Prostate gland (tissue), 2 donors: ENCODE measurements at regions of chr15 and their contacts with region 1.

Region 1: DNA sequence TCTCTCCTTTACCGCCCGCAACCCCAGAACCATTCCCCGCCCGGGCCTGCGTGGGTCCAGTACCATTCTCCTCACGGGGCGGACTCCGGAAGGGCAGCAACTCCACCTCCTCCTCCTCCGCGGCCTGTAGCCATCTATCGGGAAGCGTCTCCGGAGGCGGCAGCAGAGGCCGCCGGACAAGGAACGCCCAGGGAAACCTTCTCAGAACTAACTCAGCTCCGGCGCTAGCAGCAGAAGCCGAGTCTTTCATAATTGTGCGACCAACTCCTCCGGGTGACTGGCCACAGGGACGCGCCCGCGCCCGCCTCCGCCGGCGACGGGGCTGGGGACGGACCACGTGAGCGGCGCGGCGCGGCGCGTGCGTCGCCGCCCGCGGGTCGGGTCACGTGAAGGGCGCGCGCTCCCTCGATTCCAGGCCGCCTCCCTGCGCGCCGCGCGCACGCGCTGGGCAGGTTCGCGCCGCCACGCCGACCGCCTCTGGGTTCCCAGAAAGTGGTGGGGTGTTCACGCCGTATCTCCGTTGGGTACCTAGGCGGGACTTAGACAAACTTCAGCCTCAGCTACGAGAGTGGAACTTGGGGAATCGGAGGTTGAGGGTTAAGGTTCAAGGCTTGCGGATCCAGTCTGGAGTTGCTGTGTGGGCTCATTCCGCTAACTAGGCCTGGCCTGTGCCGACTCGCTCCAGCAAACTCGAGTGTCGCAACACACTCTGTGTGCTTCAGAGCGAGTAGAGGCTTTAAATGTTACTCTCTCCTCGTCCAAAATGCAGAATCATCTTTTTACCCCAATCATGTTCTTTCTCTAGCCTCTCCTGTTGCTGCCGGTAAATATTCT is at the start of gene TRPM7:
- DNase-seq: peak; percentile 84
- H3K4me3 ChIP-seq: peak within 1 kb of the TSS; percentile 66 to 78
- H3K27ac ChIP-seq: peak within 1 kb of the TSS; percentile 92 to 93
- H3K4me1 ChIP-seq: peaks cover 3% of the 10 kb centered on the region
- H3K27me3 ChIP-seq: no peaks in the 10 kb centered on the region
- CTCF ChIP-seq: peak in 1 of 4 experiments; percentile 4
- POLR2A ChIP-seq: peak; percentile 72
- total RNA-seq, gene TRPM7: 27.0 to 32.5 TPM

Region 2: DNA sequence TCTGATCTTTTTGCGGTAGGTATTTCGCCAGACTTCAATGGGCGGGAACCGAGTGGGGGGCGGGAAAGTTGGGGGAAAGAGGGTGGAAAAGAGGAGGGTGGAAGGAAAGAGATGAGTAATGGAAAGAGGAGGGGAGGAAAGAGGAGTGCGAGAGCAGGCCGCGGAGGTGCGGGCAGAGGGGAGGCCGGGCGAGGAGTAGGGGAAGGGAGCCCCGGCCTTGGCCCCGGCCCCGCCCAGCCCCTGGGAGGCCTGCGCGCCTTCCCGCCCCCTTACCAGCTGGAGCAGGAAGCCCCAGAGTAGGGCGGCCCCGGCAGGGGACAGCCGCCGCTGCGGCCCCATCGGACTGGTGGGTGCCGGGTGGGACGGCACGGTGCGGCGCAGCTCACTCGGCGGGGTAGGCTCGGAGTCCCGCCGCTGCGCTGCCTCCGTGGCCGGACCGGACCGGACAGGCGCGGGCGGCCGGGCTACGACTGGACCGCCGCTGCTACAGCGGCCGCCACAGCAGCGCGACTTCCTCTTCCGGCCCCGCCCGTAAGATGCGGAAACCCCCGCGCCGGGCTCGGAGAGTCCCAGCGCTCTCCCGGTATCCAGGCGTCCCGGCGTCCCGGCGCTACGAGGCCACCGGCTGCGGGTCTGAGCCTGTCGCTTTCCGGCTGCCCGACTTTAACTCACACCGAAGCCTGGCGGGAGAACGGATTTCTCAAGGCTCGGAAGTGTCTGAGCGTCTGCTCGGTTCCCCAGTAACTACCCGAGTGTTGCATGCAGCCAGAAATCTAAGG is 78.7 kb after region 1 on chr15 and contains the start of gene SPPL2A:
- intact Hi-C with region 1: loop called (anchors 2 kb)
- DNase-seq: peak; percentile 76
- H3K4me3 ChIP-seq: peak within 1 kb of the TSS; percentile 93 to 96
- H3K27ac ChIP-seq: peak within 1 kb of the TSS; percentile 94 to 95
- H3K4me1 ChIP-seq: no peaks in the 10 kb centered on the region
- H3K27me3 ChIP-seq: no peaks in the 10 kb centered on the region
- CTCF ChIP-seq: no peak
- POLR2A ChIP-seq: peak; percentile 75
- total RNA-seq, gene SPPL2A: 129 to 335 TPM

Region 3: GRCh38 chr15:50908210-50909009 is 221.7 kb after region 1 on chr15 and contains the start of gene AP4E1:
- intact Hi-C with region 1: loop called (anchors 5 kb)
- DNase-seq: peak; percentile 82
- H3K4me3 ChIP-seq: peak within 1 kb of the TSS; percentile 91 to 94
- H3K27ac ChIP-seq: peak within 1 kb of the TSS; percentile 78 to 84
- H3K4me1 ChIP-seq: no peaks in the 10 kb centered on the region
- H3K27me3 ChIP-seq: no peaks in the 10 kb centered on the region
- CTCF ChIP-seq: peak; percentile 98 to 100 (median 98)
- POLR2A ChIP-seq: no peak
- total RNA-seq, gene AP4E1: 6.1 to 9.2 TPM